B cell (primary cell): ENCODE measurements at regions of chr20 and their contacts with region 1.

Region 1: GRCh38 chr20:35619196-35620095 is 3.8 kb downstream of the SPAG4 start:
- DNase-seq: peak; percentile 90
- ATAC-seq: peak; percentile 18
- H3K4me3 ChIP-seq: peak overlapping the region; percentile 28 to 72 (median 55)
- H3K4me3 Mint-ChIP-seq: peak overlapping the region; percentile 95
- H3K27ac ChIP-seq: no peak overlapping the region
- H3K27ac Mint-ChIP-seq: peak overlapping the region; percentile 78
- H3K4me1 ChIP-seq: peaks cover 23 to 39% of the 10 kb centered on the region in 2 donors
- H3K4me1 Mint-ChIP-seq: peaks cover 36% of the 10 kb centered on the region
- H3K27me3 ChIP-seq: peaks cover 0 to 5% (median 2%) of the 10 kb centered on the region in 4 experiments
- H3K27me3 Mint-ChIP-seq: no peaks in the 10 kb centered on the region
- CTCF ChIP-seq: peak; percentile 84

Region 2: GRCh38 chr20:35146920-35147574 is 472.4 kb before region 1 on chr20 and contains the start of gene EDEM2:
- CTCF ChIA-PET with region 1: no interaction called
- POLR2A ChIA-PET with region 1: no interaction called
- intact Hi-C with region 1: loop called (anchors 5 kb)
- DNase-seq: peak; percentile 95
- ATAC-seq: peak; percentile 80
- H3K4me3 ChIP-seq: peak within 1 kb of the TSS; percentile 69 to 94 (median 90)
- H3K4me3 Mint-ChIP-seq: peak within 1 kb of the TSS; percentile 96
- H3K27ac ChIP-seq: peak within 1 kb of the TSS; percentile 79 to 89
- H3K27ac Mint-ChIP-seq: peak within 1 kb of the TSS; percentile 94
- H3K4me1 ChIP-seq: peaks cover 33 to 43% of the 10 kb centered on the region in 2 donors
- H3K4me1 Mint-ChIP-seq: peaks cover 36% of the 10 kb centered on the region
- H3K27me3 ChIP-seq: no peaks in the 10 kb centered on the region
- H3K27me3 Mint-ChIP-seq: no peaks in the 10 kb centered on the region
- CTCF ChIP-seq: no peak
- total RNA-seq, gene EDEM2: 28.1 and 28.6 TPM in 2 replicates

Region 3: DNA sequence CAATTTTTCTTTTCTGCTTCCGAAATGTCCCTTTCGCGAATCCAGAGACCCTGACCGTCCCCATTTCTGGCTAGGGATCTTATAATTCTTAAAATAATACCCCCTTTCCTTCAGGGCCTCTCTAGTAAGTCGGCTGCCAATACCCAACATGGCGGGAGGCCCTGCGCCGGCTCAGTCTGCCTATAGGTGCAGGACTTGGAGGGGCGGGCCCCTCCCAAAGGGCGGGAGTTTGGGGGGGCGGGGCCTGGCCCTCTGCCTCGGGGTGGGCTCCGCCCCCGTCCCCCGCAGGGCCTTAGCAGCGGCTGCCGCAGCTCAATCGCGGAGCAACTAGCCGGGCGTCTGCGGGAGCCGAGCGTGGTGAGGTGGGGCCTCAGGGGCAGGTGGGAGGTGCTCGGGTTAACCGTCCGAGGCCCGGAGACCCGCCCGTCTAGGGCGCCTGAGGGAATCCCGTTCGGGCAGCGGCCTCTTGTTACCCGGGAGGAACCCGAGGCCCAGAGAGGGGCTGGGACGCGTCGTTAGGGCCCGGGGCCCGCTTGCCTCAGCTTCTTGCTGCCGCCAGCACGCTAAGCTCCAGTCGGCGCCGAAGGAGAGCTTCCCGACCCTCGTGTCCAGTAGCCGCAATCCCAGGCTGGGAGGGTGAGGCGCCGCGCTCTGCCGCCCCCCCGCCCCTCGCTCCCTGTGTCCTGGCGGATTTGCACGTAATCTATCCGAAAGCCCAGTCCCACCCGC is 164.4 kb before region 1 on chr20 and contains the start of gene CEP250:
- CTCF ChIA-PET with region 1: interaction called, 3 read pairs
- POLR2A ChIA-PET with region 1: no interaction called
- intact Hi-C with region 1: loop called (anchors 1 kb)
- DNase-seq: peak; percentile 97
- ATAC-seq: peak; percentile 99
- H3K4me3 ChIP-seq: peak within 1 kb of the TSS; percentile 71 to 97 (median 94)
- H3K4me3 Mint-ChIP-seq: peak within 1 kb of the TSS; percentile 87
- H3K27ac ChIP-seq: peak within 1 kb of the TSS; percentile 82 to 97
- H3K27ac Mint-ChIP-seq: peak within 1 kb of the TSS; percentile 97
- H3K4me1 ChIP-seq: peaks cover 0 to 17% of the 10 kb centered on the region in 2 donors
- H3K4me1 Mint-ChIP-seq: peaks cover 16% of the 10 kb centered on the region
- H3K27me3 ChIP-seq: no peaks in the 10 kb centered on the region
- H3K27me3 Mint-ChIP-seq: no peaks in the 10 kb centered on the region
- CTCF ChIP-seq: no peak
- total RNA-seq, gene CEP250: 78.4 and 78.5 TPM in 2 replicates

Region 4: DNA sequence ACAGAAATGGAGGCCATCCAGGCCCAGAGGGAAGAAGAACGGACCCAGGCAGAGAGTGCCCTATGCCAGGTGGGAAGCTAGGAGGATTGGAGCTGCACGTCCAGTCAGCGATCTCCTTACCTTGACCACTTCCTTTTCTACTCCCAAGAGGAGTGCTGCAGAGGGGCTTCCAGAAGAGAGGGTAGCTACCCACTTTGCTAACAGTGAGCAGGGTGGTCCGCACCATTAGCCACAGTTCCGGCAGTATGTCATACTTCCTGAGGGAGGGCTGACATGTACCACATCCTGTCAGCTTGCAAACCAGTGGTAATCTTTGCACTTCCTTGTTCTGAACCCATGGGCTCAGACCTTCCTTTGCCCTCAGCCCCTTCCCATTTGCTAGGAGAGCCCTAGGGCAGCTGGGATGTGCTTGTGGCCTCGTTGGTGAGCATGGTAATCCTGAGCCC is 128.7 kb before region 1 on chr20:
- CTCF ChIA-PET with region 1: no interaction called
- POLR2A ChIA-PET with region 1: interaction called, 8 read pairs
- intact Hi-C with region 1: loop called (anchors 5 kb)
- DNase-seq: peak; percentile 81
- ATAC-seq: peak; percentile 100
- H3K4me3 ChIP-seq: peak overlapping the region; percentile 73 to 92 (median 85)
- H3K4me3 Mint-ChIP-seq: peak overlapping the region; percentile 98
- H3K27ac ChIP-seq: peak overlapping the region; percentile 83 to 92
- H3K27ac Mint-ChIP-seq: peak overlapping the region; percentile 96
- H3K4me1 ChIP-seq: peaks cover 39 to 58% of the 10 kb centered on the region in 2 donors
- H3K4me1 Mint-ChIP-seq: peaks cover 54% of the 10 kb centered on the region
- H3K27me3 ChIP-seq: no peaks in the 10 kb centered on the region
- H3K27me3 Mint-ChIP-seq: no peaks in the 10 kb centered on the region
- CTCF ChIP-seq: no peak

Region 5: DNA sequence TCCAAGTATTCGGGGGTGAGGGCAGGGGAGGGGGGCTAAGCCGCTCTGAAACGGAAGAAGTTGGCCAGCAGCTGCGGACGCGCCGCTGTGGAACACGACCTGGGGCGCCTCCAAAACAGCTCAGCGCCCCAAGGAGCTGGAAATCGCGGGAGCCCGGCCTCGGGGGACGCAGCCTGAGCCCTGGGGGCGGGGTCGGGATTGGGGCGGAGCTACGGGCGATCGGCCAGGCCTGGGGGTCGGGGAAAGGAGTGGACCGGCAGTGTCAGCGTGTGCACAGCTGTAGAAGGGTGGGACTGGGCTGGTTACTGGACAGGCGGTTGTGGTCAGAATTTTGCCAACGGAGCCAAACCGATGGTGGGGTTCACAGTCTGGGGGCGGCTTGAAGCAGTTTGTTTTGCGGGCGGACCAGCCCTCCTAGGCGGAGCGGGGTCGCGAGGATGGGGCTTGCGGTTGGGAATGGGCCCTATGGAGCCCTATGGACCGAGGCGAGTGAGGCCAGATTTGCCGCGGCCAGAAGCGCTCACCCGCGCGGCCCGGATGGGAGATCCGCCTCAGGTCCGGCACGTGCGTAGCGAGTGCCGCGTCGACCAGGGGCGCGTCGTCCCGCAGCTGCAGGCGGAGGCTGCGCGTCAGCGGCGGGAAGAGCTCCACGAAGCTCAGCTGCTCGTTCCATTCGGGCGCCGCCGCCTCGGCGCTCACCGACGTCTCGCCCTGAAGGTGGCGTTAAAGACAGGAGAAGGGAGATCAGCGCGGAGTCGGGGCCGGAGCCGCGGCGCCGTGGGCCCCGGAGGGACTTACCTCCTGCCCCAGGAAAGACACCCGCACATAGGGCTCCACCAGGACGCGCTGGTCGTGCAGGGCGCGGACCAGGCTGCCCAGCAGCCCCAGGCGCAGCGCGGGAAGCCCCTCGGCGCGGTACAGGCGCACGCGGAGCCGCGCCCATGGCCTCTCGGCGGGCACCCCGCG is 18.2 kb before region 1 on chr20:
- CTCF ChIA-PET with region 1: interaction called, 25 read pairs
- POLR2A ChIA-PET with region 1: interaction called, 3 read pairs
- intact Hi-C with region 1: loop called (anchors 1 kb)
- DNase-seq: peak; percentile 88
- ATAC-seq: peak; percentile 78
- H3K4me3 ChIP-seq: peak overlapping the region in 4 of 5 experiments; percentile 40 to 77 (median 58)
- H3K4me3 Mint-ChIP-seq: peak overlapping the region; percentile 89
- H3K27ac ChIP-seq: no peak overlapping the region
- H3K27ac Mint-ChIP-seq: no peak overlapping the region
- H3K4me1 ChIP-seq: peaks cover 16 to 17% of the 10 kb centered on the region in 2 donors
- H3K4me1 Mint-ChIP-seq: peaks cover 12% of the 10 kb centered on the region
- H3K27me3 ChIP-seq: peaks cover 0 to 40% (median 15%) of the 10 kb centered on the region in 4 experiments
- H3K27me3 Mint-ChIP-seq: peaks cover 44% of the 10 kb centered on the region
- CTCF ChIP-seq: peak; percentile 48

Region 6: GRCh38 chr20:35664544-35665221 is 45.2 kb after region 1 on chr20 and contains the starts of genes CPNE1 and RBM12:
- CTCF ChIA-PET with region 1: interaction called, 6 read pairs
- POLR2A ChIA-PET with region 1: interaction called, 38 read pairs
- intact Hi-C with region 1: loop called (anchors 1 kb)
- DNase-seq: peak; percentile 96
- ATAC-seq: peak; percentile 77
- H3K4me3 ChIP-seq: peak within 1 kb of the TSS; percentile 76 to 98 (median 90)
- H3K4me3 Mint-ChIP-seq: peak within 1 kb of the TSS; percentile 92
- H3K27ac ChIP-seq: peak within 1 kb of the TSS; percentile 96 to 97
- H3K27ac Mint-ChIP-seq: peak within 1 kb of the TSS; percentile 100
- H3K4me1 ChIP-seq: peaks cover 39 to 42% of the 10 kb centered on the region in 2 donors
- H3K4me1 Mint-ChIP-seq: peaks cover 48% of the 10 kb centered on the region
- H3K27me3 ChIP-seq: no peaks in the 10 kb centered on the region
- H3K27me3 Mint-ChIP-seq: no peaks in the 10 kb centered on the region
- CTCF ChIP-seq: no peak
- total RNA-seq, gene CPNE1: 323 and 331 TPM in 2 replicates
- total RNA-seq, gene RBM12: 144 and 145 TPM in 2 replicates

Region 7: GRCh38 chr20:35771689-35772562 is 152.5 kb after region 1 on chr20 and contains the start of gene PHF20:
- CTCF ChIA-PET with region 1: no interaction called
- POLR2A ChIA-PET with region 1: interaction called, 11 read pairs
- intact Hi-C with region 1: loop called (anchors 1 kb)
- DNase-seq: peak; percentile 100
- ATAC-seq: peak; percentile 80
- H3K4me3 ChIP-seq: peak within 1 kb of the TSS; percentile 67 to 98 (median 89)
- H3K4me3 Mint-ChIP-seq: peak within 1 kb of the TSS; percentile 88
- H3K27ac ChIP-seq: peak within 1 kb of the TSS; percentile 95 to 99
- H3K27ac Mint-ChIP-seq: peak within 1 kb of the TSS; percentile 99
- H3K4me1 ChIP-seq: peaks cover 80 to 88% of the 10 kb centered on the region in 2 donors
- H3K4me1 Mint-ChIP-seq: peaks cover 72% of the 10 kb centered on the region
- H3K27me3 ChIP-seq: no peaks in the 10 kb centered on the region
- H3K27me3 Mint-ChIP-seq: no peaks in the 10 kb centered on the region
- CTCF ChIP-seq: no peak
- total RNA-seq, gene PHF20: 92.3 and 101 TPM in 2 replicates